Left colon (tissue), 2 donors: ENCODE measurements at regions of chr4 and their contacts with region 1.

Region 1: GRCh38 chr4:150867148-150867547 is 147.9 kb downstream of the LRBA start:
- DNase-seq: no peak
- ATAC-seq: peak; percentile 91

Region 2: GRCh38 chr4:149980941-149981340 is 886.2 kb before region 1 on chr4:
- intact Hi-C with region 1: loop called in 1 of 2 experiments (anchors 5 kb)
- DNase-seq: peak in 1 of 2 donors; percentile 56
- ATAC-seq: peak; percentile 80

Region 3: GRCh38 chr4:150278206-150278605 is 588.9 kb before region 1 on chr4:
- intact Hi-C with region 1: loop called in 1 of 2 experiments (anchors 5 kb)
- DNase-seq: no peak
- ATAC-seq: no peak

Region 4: DNA sequence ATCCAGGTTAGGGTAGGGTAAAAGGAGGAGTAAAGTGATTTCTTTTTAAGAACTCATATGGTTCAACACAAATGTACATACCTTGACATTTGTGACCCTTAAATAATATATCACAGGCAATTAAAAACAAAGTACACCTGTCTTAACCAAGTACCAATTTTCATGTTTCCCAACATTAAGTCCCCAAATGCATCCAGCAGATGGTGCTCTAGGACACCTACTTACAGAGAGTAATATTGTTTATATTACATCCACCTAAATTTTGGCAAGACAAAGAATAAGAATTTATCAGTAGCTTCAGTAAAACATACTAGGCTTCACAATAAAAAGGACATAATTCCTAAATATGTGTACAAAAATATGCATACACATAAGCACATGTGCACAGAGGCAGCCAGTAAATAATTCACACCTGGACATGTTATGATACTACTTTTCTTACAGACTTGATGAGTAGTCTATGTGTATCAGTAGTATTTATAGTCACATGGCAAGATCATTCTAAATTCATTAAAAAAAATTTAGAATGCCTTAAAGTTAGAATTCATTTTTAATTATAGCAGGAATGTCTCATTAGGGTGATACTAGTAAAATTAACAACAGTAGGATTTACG is 569.2 kb before region 1 on chr4:
- intact Hi-C with region 1: loop called in 1 of 2 experiments (anchors 5 kb)
- DNase-seq: peak in 1 of 2 donors; percentile 54
- ATAC-seq: peak; percentile 59